Activated CD4-positive, alpha-beta memory T cell treated with anti-CD3 and anti-CD28 coated beads, Interleukin-2, amount 10 ng/mL, durations not matched to agents 7 days and 5 days (primary cell): ENCODE measurements at regions of chr17 and their contacts with region 1.

Region 1: GRCh38 chr17:77666881-77667395 is 291.6 kb upstream of the TNRC6C start:
- DNase-seq: peak; percentile 90
- H3K4me3 Mint-ChIP-seq: peak overlapping the region; percentile 85
- H3K27ac Mint-ChIP-seq: peak overlapping the region; percentile 97
- H3K4me1 Mint-ChIP-seq: peaks cover 46% of the 10 kb centered on the region
- H3K27me3 Mint-ChIP-seq: no peaks in the 10 kb centered on the region

Region 2: GRCh38 chr17:77542551-77543490 is 124.1 kb before region 1 on chr17:
- CTCF ChIA-PET with region 1: no interaction called
- POLR2A ChIA-PET with region 1: no interaction called
- DNase-seq: peak; percentile 71
- H3K4me3 Mint-ChIP-seq: no peak overlapping the region
- H3K27ac Mint-ChIP-seq: no peak overlapping the region
- H3K4me1 Mint-ChIP-seq: peaks cover 4% of the 10 kb centered on the region
- H3K27me3 Mint-ChIP-seq: peaks cover 27% of the 10 kb centered on the region

Region 3: DNA sequence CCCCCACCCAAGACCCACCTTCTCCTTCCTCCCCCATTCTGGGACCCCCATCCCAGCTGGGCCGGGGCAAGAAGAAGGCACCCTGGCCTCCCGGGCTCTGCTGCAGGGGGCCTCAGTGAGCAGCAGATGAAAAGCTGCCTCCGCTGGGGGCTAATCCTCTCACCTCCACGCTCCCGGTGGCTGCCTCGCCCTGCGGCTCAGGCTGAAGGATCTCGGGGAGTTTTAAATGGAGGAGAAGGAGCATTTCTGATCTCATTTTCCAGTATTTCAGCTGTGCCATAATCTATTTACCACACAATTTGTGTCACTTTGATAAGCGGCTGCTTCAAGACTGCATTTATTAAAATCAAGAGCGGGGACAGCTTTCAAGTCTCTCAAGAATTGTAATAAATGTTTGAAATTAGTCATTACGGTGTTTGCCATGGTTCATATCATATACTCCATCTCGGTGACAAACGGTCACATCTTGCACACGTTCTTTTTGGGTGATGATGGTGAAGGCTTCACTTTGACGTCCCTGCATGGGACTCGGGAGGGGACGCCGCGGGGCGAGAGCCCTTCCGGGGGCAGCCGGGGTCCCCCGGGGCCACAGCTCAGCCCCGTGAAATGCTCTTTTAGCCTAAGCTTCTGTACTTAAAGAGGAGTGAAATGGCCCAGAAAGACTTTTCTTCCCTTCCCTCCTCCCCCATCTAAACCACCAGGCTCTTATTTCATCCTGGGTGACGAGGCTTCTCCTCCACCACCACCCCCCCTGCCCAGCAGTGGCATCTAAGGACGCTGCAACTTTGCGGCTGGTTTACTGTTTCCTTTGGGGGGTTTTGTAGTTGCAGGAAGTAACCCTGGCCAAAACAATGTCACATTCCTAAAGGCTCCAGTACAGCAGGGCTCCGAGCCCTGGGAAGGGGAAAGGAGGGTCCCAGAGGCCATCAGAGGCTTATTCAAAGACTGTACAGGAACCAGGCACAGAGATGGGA is 21.6 kb before region 1 on chr17:
- CTCF ChIA-PET with region 1: interaction called, 15 read pairs
- POLR2A ChIA-PET with region 1: interaction called, 62 read pairs
- DNase-seq: peak; percentile 72
- H3K4me3 Mint-ChIP-seq: peak overlapping the region; percentile 58
- H3K27ac Mint-ChIP-seq: peak overlapping the region; percentile 89
- H3K4me1 Mint-ChIP-seq: peaks cover 43% of the 10 kb centered on the region
- H3K27me3 Mint-ChIP-seq: peaks cover 10% of the 10 kb centered on the region

Region 4: DNA sequence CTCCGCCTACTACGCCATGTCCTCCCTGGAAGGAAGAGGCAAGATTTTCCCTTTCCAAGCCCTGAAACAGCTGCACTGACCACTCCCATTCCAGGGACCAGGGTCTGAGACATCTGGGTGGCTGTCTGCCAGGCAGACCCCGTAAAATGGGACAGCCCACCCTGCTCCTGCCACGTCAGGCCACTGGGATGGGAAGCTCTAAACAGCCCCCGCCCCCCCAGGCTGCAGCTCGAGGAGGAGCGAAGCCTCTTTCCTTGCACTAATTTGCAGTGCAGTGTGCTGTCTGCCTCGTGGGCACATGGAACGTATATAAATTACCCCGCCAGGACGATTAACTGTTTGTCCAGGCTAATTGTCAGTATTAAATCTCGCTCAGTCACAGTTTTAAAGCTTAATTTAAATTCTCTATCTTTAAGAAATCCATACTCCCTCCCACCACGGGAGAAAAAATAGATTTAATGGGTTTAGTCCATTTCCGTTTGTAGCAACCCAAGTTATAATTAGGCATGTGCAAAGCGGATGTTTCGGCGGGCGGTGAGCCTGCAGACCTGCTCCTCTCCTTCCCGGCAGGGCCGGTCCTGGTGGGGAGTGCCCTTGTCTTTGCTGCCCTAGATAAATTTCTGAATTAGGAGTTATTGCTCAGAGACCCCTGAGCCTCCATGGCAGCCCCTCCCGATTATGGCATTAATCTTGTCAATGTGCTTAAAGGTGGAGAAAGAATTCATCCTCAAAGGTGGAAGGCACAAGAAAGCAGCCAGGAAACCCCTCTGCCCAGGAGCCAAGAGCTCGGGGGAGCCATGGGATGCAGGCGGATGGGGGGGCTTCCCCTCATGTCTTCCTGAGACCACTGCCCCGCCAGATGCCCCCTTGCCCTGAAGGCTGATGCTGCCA is 23.6 kb after region 1 on chr17:
- CTCF ChIA-PET with region 1: interaction called, 3 read pairs
- POLR2A ChIA-PET with region 1: interaction called, 30 read pairs
- DNase-seq: peak; percentile 50
- H3K4me3 Mint-ChIP-seq: no peak overlapping the region
- H3K27ac Mint-ChIP-seq: peak overlapping the region; percentile 25
- H3K4me1 Mint-ChIP-seq: peaks cover 43% of the 10 kb centered on the region
- H3K27me3 Mint-ChIP-seq: peaks cover 11% of the 10 kb centered on the region

Region 5: GRCh38 chr17:77701996-77702395 is 35.1 kb after region 1 on chr17:
- CTCF ChIA-PET with region 1: no interaction called
- POLR2A ChIA-PET with region 1: no interaction called
- DNase-seq: no peak
- H3K4me3 Mint-ChIP-seq: no peak overlapping the region
- H3K27ac Mint-ChIP-seq: no peak overlapping the region
- H3K4me1 Mint-ChIP-seq: no peaks in the 10 kb centered on the region
- H3K27me3 Mint-ChIP-seq: peaks cover 20% of the 10 kb centered on the region